Endothelial cell of umbilical vein (primary cell): ENCODE measurements at regions of chr22 and their contacts with region 1.

Region 1: GRCh38 chr22:36775964-36776669 is at the start of gene IFT27:
- DNase-seq: peak; percentile 100
- H3K4me3 ChIP-seq: peak within 1 kb of the TSS; percentile 59 to 93 (median 75)
- H3K27ac ChIP-seq: no peak within 1 kb of the TSS
- H3K4me1 ChIP-seq: peaks cover 10% of the 10 kb centered on the region
- H3K27me3 ChIP-seq: no peaks in the 10 kb centered on the region
- CTCF ChIP-seq: no peak
- POLR2A ChIP-seq: peak; percentile 61
- total RNA-seq, gene IFT27: 30.5 and 33.7 TPM in 2 replicates

Region 2: DNA sequence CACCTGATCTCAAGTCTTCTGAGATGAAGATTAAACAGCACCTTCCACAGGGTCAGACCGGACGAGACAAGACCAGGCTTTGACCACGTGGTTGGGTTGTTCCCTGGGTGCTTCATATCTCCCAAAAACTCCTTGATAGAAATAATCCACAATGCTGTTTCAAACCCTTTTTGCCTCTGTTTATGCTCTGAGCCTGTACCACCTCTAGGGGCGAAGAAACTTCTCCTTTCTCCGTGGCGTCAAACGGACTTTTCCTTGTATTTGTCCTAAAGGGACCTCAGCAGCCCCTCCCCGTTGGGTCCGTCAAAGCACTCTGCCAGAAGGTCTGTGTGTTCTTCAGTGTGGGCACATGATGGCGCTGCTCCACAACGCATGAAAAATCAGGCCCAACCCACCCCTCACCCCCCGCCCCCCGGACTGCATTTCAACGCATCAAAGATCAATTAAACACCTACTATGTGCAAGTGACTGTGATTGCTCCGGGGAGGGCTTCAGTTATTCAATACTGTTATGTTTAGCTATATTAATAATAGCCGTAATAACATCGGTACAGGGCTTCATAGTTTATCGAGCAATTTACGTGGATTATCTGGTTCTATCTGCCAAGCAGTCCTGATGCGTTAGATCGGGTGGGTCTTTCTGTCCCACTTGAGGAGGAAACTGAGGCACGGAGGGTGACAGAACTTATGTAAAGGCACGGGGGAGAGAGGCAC is 229.9 kb before region 1 on chr22:
- CTCF ChIA-PET with region 1: interaction called, 18 read pairs
- POLR2A ChIA-PET with region 1: interaction called, 4 read pairs
- dilution Hi-C with region 1: no loop called
- intact Hi-C with region 1: loop called (anchors 1 kb)
- DNase-seq: peak; percentile 54
- H3K4me3 ChIP-seq: no peak overlapping the region
- H3K27ac ChIP-seq: no peak overlapping the region
- H3K4me1 ChIP-seq: peaks cover 23% of the 10 kb centered on the region
- H3K27me3 ChIP-seq: peaks cover 2 to 4% of the 10 kb centered on the region in 2 experiments
- CTCF ChIP-seq: peak; percentile 45 to 68
- POLR2A ChIP-seq: no peak

Region 3: GRCh38 chr22:36613958-36614357 is 162.2 kb before region 1 on chr22:
- CTCF ChIA-PET with region 1: no interaction called
- POLR2A ChIA-PET with region 1: no interaction called
- dilution Hi-C with region 1: no loop called
- intact Hi-C with region 1: no loop called
- DNase-seq: no peak
- H3K4me3 ChIP-seq: no peak overlapping the region
- H3K27ac ChIP-seq: no peak overlapping the region
- H3K4me1 ChIP-seq: no peaks in the 10 kb centered on the region
- H3K27me3 ChIP-seq: peaks cover 13 to 17% of the 10 kb centered on the region in 2 experiments
- CTCF ChIP-seq: no peak
- POLR2A ChIP-seq: no peak

Region 4: GRCh38 chr22:36734171-36735058 is 41.7 kb before region 1 on chr22:
- CTCF ChIA-PET with region 1: no interaction called
- POLR2A ChIA-PET with region 1: no interaction called
- dilution Hi-C with region 1: no loop called
- intact Hi-C with region 1: no loop called
- DNase-seq: no peak
- H3K4me3 ChIP-seq: no peak overlapping the region
- H3K27ac ChIP-seq: no peak overlapping the region
- H3K4me1 ChIP-seq: no peaks in the 10 kb centered on the region
- H3K27me3 ChIP-seq: peaks cover 0 to 8% of the 10 kb centered on the region in 2 experiments
- CTCF ChIP-seq: no peak
- POLR2A ChIP-seq: no peak

Region 5: DNA sequence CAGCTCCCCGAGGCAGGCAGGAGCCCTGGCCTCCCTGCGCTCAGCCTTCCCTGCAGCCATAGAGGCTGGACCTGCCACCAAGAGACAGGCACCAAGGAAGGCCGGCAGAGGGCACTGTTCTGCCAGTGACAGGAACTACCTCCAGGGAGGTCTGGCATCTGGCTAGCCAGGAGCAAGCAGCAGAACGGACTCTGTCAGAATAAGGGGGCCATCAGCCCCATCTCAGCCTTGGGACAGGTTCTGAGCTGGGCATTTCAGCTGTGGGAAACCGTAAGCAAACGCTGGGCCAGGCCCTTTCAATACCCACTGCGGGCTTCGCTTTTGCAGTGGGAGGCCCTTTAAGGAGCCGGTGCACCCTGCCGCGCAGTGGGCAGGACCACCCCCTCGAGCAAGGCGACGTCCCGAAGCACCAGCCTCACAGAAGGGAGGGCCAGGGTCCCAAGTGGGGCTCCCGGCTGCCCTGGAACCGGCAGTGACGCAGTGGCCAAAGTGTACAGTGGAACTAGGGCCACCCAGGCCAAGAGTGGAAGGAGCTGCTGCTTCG is 18.4 kb before region 1 on chr22:
- CTCF ChIA-PET with region 1: interaction called, 75 read pairs
- POLR2A ChIA-PET with region 1: no interaction called
- dilution Hi-C with region 1: no loop called
- intact Hi-C with region 1: loop called (anchors 2 kb)
- DNase-seq: peak; percentile 53
- H3K4me3 ChIP-seq: no peak overlapping the region
- H3K27ac ChIP-seq: no peak overlapping the region
- H3K4me1 ChIP-seq: no peaks in the 10 kb centered on the region
- H3K27me3 ChIP-seq: peaks cover 0 to 4% of the 10 kb centered on the region in 2 experiments
- CTCF ChIP-seq: peak; percentile 82 to 94
- POLR2A ChIP-seq: no peak

Region 6: GRCh38 chr22:36839356-36840073 is 63.4 kb after region 1 on chr22:
- CTCF ChIA-PET with region 1: no interaction called
- POLR2A ChIA-PET with region 1: no interaction called
- dilution Hi-C with region 1: loop called (anchors 10 kb)
- intact Hi-C with region 1: no loop called
- DNase-seq: no peak
- H3K4me3 ChIP-seq: no peak overlapping the region
- H3K27ac ChIP-seq: no peak overlapping the region
- H3K4me1 ChIP-seq: no peaks in the 10 kb centered on the region
- H3K27me3 ChIP-seq: peaks cover 5% of the 10 kb centered on the region in 2 experiments
- CTCF ChIP-seq: no peak
- POLR2A ChIP-seq: no peak